ENCODE measurements at regions of chr16 and their contacts with region 1.

Region 1: DNA sequence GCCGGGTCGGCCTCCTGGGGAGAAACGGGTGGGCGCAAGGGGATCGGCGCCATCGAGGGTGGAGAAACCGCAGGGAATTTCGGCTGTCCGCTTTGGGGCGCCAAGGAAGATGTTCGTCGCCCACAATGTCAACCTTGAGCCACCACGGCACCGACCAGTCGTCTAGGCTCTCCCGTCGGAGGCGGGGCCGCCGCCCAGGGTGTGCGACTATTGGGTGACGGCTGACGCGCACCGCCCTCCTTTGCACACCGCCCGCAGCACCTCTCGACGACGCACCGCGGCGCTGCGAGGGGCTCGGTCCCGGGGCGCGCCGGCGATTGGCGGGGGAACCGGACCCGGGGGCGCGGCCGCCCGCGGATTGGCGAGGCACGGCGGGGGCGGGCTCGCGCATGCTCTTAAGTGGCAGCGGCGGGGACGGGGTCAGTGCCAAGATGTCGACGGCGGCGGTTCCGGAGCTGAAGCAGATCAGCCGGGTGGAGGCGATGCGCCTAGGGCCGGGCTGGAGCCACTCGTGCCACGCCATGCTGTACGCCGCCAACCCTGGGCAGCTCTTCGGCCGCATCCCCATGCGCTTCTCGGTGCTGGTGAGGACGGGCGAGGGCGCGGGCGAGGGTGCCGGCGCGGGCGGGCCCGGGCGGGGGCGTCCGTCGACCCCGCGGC is at the start of gene NUDT16L1:
- DNase-seq: peak; percentile 98
- ATAC-seq: peak; percentile 96
- H3K4me3 Mint-ChIP-seq: peak within 1 kb of the TSS; percentile 85
- H3K27ac Mint-ChIP-seq: peak within 1 kb of the TSS; percentile 69
- H3K4me1 Mint-ChIP-seq: peaks cover 9% of the 10 kb centered on the region
- H3K27me3 Mint-ChIP-seq: no peaks in the 10 kb centered on the region
- CTCF ChIP-seq: no peak
- total RNA-seq, gene NUDT16L1: 32.0 and 32.9 TPM in 2 replicates

Region 2: GRCh38 chr16:4271176-4272066 is 422.0 kb before region 1 on chr16:
- CTCF ChIA-PET with region 1: no interaction called
- POLR2A ChIA-PET with region 1: no interaction called
- intact Hi-C with region 1: loop called (anchors 1 kb)
- DNase-seq: peak; percentile 82
- ATAC-seq: peak; percentile 81
- H3K4me3 Mint-ChIP-seq: peak overlapping the region; percentile 86
- H3K27ac Mint-ChIP-seq: peak overlapping the region; percentile 88
- H3K4me1 Mint-ChIP-seq: peaks cover 11% of the 10 kb centered on the region
- H3K27me3 Mint-ChIP-seq: no peaks in the 10 kb centered on the region
- CTCF ChIP-seq: no peak

Region 3: GRCh38 chr16:4416200-4417032 is 277.0 kb before region 1 on chr16 and contains the start of gene CORO7:
- CTCF ChIA-PET with region 1: no interaction called
- POLR2A ChIA-PET with region 1: no interaction called
- intact Hi-C with region 1: loop called (anchors 5 kb)
- DNase-seq: peak; percentile 99
- ATAC-seq: peak; percentile 89
- H3K4me3 Mint-ChIP-seq: peak within 1 kb of the TSS; percentile 91
- H3K27ac Mint-ChIP-seq: peak within 1 kb of the TSS; percentile 95
- H3K4me1 Mint-ChIP-seq: peaks cover 36% of the 10 kb centered on the region
- H3K27me3 Mint-ChIP-seq: no peaks in the 10 kb centered on the region
- CTCF ChIP-seq: no peak
- total RNA-seq, gene CORO7: 74.6 and 86.6 TPM in 2 replicates

Region 4: GRCh38 chr16:4624015-4624826 is 69.2 kb before region 1 on chr16 and contains the start of gene MGRN1:
- CTCF ChIA-PET with region 1: interaction called, 4 read pairs
- POLR2A ChIA-PET with region 1: interaction called, 5 read pairs
- intact Hi-C with region 1: loop called (anchors 1 kb)
- DNase-seq: peak; percentile 86
- ATAC-seq: peak; percentile 90
- H3K4me3 Mint-ChIP-seq: peak within 1 kb of the TSS; percentile 99
- H3K27ac Mint-ChIP-seq: peak within 1 kb of the TSS; percentile 100
- H3K4me1 Mint-ChIP-seq: peaks cover 31% of the 10 kb centered on the region
- H3K27me3 Mint-ChIP-seq: no peaks in the 10 kb centered on the region
- CTCF ChIP-seq: peak; percentile 91
- total RNA-seq, gene MGRN1: 69.6 and 88.6 TPM in 2 replicates

Region 5: GRCh38 chr16:4649744-4650442 is 43.5 kb before region 1 on chr16:
- CTCF ChIA-PET with region 1: no interaction called
- POLR2A ChIA-PET with region 1: no interaction called
- intact Hi-C with region 1: loop called (anchors 2 kb)
- DNase-seq: no peak
- ATAC-seq: no peak
- H3K4me3 Mint-ChIP-seq: no peak overlapping the region
- H3K27ac Mint-ChIP-seq: no peak overlapping the region
- H3K4me1 Mint-ChIP-seq: peaks cover 27% of the 10 kb centered on the region
- H3K27me3 Mint-ChIP-seq: no peaks in the 10 kb centered on the region
- CTCF ChIP-seq: no peak

Region 6: DNA sequence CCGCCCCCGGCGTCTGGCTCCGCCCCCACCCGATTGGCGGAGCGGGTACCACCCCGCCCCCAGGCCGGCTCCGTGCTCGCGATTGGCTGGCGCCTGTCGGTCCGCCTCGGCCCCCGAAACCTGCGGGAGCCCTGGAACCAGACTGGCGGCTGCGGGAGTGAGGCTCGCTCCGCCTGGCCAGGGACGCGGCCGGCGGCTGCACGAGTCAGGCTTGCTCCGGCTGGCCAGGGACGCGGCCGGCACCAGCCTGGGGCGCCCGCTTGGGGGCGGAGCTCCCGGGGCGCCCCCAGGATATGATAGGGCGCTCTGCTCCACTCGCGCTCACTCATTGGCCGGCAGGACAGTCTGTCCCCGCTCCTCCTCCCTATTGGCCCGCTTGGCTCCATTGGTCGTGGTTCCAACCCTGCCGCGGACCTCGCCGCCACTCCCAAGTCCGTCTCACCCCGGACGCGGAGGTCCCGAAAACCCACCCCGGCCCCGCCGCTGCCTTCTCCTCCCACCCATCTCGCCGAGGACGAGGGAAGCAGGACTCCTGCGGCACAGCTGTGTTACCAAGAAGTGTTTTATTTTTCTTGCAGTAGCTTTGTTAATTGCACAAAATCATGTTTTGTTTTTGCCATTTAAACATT is 109.3 kb after region 1 on chr16:
- CTCF ChIA-PET with region 1: no interaction called
- POLR2A ChIA-PET with region 1: interaction called, 9 read pairs
- intact Hi-C with region 1: loop called (anchors 1 kb)
- DNase-seq: peak; percentile 97
- ATAC-seq: peak; percentile 88
- H3K4me3 Mint-ChIP-seq: peak overlapping the region; percentile 86
- H3K27ac Mint-ChIP-seq: peak overlapping the region; percentile 69
- H3K4me1 Mint-ChIP-seq: peaks cover 25% of the 10 kb centered on the region
- H3K27me3 Mint-ChIP-seq: no peaks in the 10 kb centered on the region
- CTCF ChIP-seq: no peak